ENCODE measurements at regions of chr1 and their contacts with region 1.

Region 1: DNA sequence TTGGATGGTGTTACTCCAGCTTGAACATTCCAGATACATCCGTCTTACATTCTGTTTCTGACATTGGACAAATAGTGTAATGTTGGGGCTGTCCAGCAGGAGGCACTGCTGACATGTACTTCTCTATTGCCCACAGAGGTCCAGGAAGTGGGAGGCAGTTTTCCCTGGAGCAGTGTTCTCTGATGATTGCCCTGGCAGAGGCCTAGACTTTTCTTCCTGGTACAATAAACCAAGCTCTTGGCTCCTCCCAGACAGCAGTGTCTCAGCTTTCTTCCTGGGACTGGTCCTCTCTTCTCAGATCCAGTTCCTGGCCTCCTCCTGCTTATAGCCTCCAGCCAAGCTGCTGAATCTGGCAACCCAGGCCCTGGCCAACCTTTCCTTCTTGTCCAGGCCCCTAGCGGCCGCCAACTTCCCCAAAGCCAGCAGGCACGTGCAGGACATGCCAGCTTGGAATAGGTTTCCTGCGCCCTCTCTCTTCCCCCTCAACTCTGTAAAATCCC is 14.9 kb upstream of the IFNLR1 start:
- DNase-seq: peak; percentile 60 to 73 (median 71)
- ATAC-seq: peak; percentile 65 to 83 (median 80)
- H3K4me3 ChIP-seq: no peak overlapping the region
- H3K27ac ChIP-seq: peak overlapping the region in 2 of 12 donors; percentile 1 to 9
- H3K4me1 ChIP-seq: peaks cover 0 to 19% (median 0%) of the 10 kb centered on the region in 12 donors
- H3K27me3 ChIP-seq: no peaks in the 10 kb centered on the region
- CTCF ChIP-seq: peak; percentile 67 to 84 (median 78)
- POLR2A ChIP-seq: no peak

Region 2: DNA sequence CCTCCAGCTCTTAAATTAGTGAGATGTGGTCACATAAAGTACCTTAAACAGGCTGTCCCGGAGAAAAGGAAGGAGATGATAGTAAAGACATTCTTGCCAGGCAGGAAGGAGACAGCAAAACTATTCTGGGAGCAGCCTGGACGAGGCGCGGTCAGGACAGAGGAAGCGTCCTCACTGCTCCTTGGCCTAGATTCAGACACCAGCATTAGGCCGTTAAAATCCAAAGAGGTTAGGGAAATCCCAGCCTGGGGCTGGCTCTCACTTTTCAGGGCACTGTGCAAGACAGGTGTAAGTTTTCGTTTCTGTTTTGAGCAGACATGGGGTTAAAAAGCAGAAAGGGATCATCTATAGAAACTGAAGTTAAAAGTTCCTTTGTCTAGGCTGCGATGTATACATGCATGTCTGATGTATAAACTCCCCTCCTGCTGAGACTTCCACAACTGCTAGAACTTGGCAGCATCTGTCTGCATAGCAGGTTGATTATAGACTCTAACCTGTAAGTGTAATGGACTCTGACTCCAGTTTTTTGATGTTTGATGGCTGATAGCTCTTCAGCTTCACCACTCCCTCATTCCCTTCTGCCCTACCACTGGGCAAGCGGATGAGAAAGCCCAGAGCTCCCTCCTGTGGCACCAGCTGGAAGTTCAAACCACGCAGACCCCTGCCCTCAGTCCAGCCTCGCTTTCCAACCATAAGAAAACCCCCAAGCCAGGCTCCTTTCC is 190.1 kb after region 1 on chr1:
- intact Hi-C with region 1: loop called (anchors 1 to 2 kb)
- DNase-seq: peak in 4 of 5 donors; percentile 58 to 67 (median 60)
- ATAC-seq: peak; percentile 83 to 89 (median 86)
- H3K4me3 ChIP-seq: peak overlapping the region in 9 of 12 donors; percentile 14 to 38 (median 25)
- H3K27ac ChIP-seq: peak overlapping the region; percentile 58 to 86 (median 74)
- H3K4me1 ChIP-seq: peaks cover 0 to 21% (median 14%) of the 10 kb centered on the region in 12 donors
- H3K27me3 ChIP-seq: no peaks in the 10 kb centered on the region
- CTCF ChIP-seq: peak; percentile 61 to 80 (median 72)
- POLR2A ChIP-seq: no peak

Region 3: DNA sequence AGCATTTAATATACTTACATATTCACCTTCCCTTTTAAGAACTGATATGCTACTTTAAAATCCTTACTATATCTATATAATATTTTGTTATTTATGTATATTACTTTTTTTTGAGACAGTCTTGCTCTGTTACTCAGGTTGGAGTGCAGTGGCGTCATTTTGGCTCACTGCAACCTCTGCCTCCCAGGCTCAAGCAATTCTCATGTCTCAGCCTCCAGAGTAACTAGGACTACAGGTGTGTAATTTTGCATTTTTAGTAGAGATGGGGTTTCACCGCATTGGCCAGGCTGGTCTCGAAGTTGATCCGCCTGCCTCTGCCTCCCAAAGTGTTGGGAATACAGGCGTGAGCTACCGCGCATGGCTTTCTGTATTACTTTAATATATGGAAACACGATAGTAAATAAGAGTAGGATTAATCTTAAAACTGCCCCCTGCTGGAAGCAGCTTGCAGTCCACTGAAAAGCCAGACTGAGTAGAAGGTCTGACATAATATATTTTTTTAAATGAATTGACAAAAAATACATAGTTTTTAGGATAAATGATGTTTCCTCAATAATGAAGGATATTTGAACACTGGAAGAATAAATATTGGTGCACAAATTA is 325.1 kb after region 1 on chr1:
- intact Hi-C with region 1: loop called in 3 of 10 experiments (anchors 5 to 10 kb)
- DNase-seq: no peak
- ATAC-seq: no peak
- H3K4me3 ChIP-seq: no peak overlapping the region
- H3K27ac ChIP-seq: no peak overlapping the region
- H3K4me1 ChIP-seq: no peaks in the 10 kb centered on the region
- H3K27me3 ChIP-seq: no peaks in the 10 kb centered on the region
- CTCF ChIP-seq: peak; percentile 25 to 59 (median 40)
- POLR2A ChIP-seq: no peak

Region 4: GRCh38 chr1:24536391-24536840 is 334.4 kb after region 1 on chr1:
- intact Hi-C with region 1: loop called in 1 of 10 experiments (anchors 10 kb)
- DNase-seq: no peak
- ATAC-seq: peak in 1 of 4 donors; percentile 47
- H3K4me3 ChIP-seq: no peak overlapping the region
- H3K27ac ChIP-seq: peak overlapping the region in 1 of 12 donors; percentile 83
- H3K4me1 ChIP-seq: peaks cover 0 to 19% (median 0%) of the 10 kb centered on the region in 12 donors
- H3K27me3 ChIP-seq: no peaks in the 10 kb centered on the region
- CTCF ChIP-seq: no peak
- POLR2A ChIP-seq: no peak

Region 5: GRCh38 chr1:24621121-24621520 is 419.1 kb after region 1 on chr1:
- intact Hi-C with region 1: loop called in 1 of 10 experiments (anchors 5 kb)
- DNase-seq: no peak
- ATAC-seq: no peak
- H3K4me3 ChIP-seq: no peak overlapping the region
- H3K27ac ChIP-seq: no peak overlapping the region
- H3K4me1 ChIP-seq: no peaks in the 10 kb centered on the region
- H3K27me3 ChIP-seq: peaks cover 0 to 10% (median 0%) of the 10 kb centered on the region in 9 donors
- CTCF ChIP-seq: no peak
- POLR2A ChIP-seq: no peak

Measured in heart left ventricle (tissue), 16 donors.